ENCODE measurements at regions of chrX and their contacts with region 1.

Region 1: GRCh38 chrX:39320165-39320564 is 518.9 kb downstream of the MID1IP1 start:
- DNase-seq: no peak
- H3K4me3 Mint-ChIP-seq: peak overlapping the region; percentile 32
- H3K27ac Mint-ChIP-seq: peak overlapping the region; percentile 70
- H3K4me1 Mint-ChIP-seq: peaks cover 74% of the 10 kb centered on the region
- H3K27me3 Mint-ChIP-seq: no peaks in the 10 kb centered on the region

Region 2: GRCh38 chrX:39201305-39201990 is 118.7 kb before region 1 on chrX:
- CTCF ChIA-PET with region 1: no interaction called
- POLR2A ChIA-PET with region 1: no interaction called
- intact Hi-C with region 1: loop called (anchors 10 kb)
- DNase-seq: peak; percentile 25
- H3K4me3 Mint-ChIP-seq: no peak overlapping the region
- H3K27ac Mint-ChIP-seq: peak overlapping the region; percentile 65
- H3K4me1 Mint-ChIP-seq: peaks cover 69% of the 10 kb centered on the region
- H3K27me3 Mint-ChIP-seq: no peaks in the 10 kb centered on the region

Measured in activated CD4-positive, alpha-beta memory T cell treated with anti-CD3 and anti-CD28 coated beads for 36 hours (primary cell).